AG04450 (cell line): ENCODE measurements at regions of chr13 and their contacts with region 1.

Region 1: DNA sequence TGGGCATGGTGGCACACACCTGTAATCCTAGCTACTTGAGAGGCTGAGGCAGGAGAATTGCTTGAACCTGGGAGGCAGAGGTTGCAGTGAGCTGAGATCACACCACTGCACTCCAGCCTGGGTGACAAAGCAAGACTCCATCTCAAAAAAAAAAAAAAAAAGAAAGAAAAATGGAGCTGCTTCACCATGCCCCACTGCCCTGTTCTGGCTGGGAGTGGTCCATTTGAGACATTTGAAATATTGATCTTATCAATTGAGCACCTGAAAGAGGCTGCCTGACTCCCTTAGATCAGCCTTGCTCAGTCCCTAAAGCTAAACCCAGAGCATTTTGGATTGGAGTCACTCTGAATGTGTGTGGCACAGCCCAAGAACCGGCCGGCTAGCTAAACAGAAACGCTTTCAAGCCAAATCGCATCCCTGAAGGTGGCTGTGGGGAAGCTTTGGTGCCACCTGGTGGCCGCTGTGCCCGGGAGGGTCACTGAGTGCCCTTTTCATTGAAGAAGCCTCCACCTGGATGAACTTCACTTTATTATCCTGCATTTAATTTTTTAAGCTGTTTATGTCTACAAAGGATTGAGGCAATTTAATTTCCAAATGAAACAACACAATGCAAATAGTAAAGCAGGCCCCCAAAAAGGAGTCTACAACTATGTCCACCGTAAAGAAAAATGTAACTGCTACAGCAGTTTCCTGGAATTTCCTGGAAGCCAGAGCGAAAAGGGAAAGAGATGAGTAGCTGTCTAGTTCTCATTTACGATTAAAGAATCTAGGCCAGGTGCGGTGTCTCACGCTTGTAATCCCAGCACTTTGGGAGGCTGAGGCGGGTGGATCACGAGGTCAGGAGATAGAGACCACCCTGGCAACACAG is 53.1 kb upstream of the SERPINE3 start:
- DNase-seq: peak; percentile 10
- H3K4me3 ChIP-seq: no peak overlapping the region
- H3K27ac ChIP-seq: no peak overlapping the region
- H3K27me3 ChIP-seq: peaks cover 7% of the 10 kb centered on the region
- CTCF ChIP-seq: peak; percentile 98

Region 2: GRCh38 chr13:51136276-51136980 is 149.9 kb before region 1 on chr13:
- CTCF ChIA-PET with region 1: interaction called, 182 read pairs
- POLR2A ChIA-PET with region 1: no interaction called
- DNase-seq: no peak
- H3K4me3 ChIP-seq: no peak overlapping the region
- H3K27ac ChIP-seq: no peak overlapping the region
- H3K27me3 ChIP-seq: no peaks in the 10 kb centered on the region
- CTCF ChIP-seq: no peak

Region 3: GRCh38 chr13:51154029-51154555 is 132.3 kb before region 1 on chr13:
- CTCF ChIA-PET with region 1: interaction called, 203 read pairs
- POLR2A ChIA-PET with region 1: interaction called, 8 read pairs
- DNase-seq: no peak
- H3K4me3 ChIP-seq: no peak overlapping the region
- H3K27ac ChIP-seq: no peak overlapping the region
- H3K27me3 ChIP-seq: peaks cover 10% of the 10 kb centered on the region
- CTCF ChIP-seq: no peak

Region 4: GRCh38 chr13:51235756-51236490 is 50.4 kb before region 1 on chr13:
- CTCF ChIA-PET with region 1: interaction called, 20 read pairs
- POLR2A ChIA-PET with region 1: no interaction called
- DNase-seq: no peak
- H3K4me3 ChIP-seq: no peak overlapping the region
- H3K27ac ChIP-seq: no peak overlapping the region
- H3K27me3 ChIP-seq: peaks cover 12% of the 10 kb centered on the region
- CTCF ChIP-seq: no peak

Region 5: GRCh38 chr13:51269039-51269438 is 17.3 kb before region 1 on chr13:
- CTCF ChIA-PET with region 1: interaction called, 84 read pairs
- POLR2A ChIA-PET with region 1: no interaction called
- DNase-seq: no peak
- H3K4me3 ChIP-seq: no peak overlapping the region
- H3K27ac ChIP-seq: no peak overlapping the region
- H3K27me3 ChIP-seq: peaks cover 2% of the 10 kb centered on the region
- CTCF ChIP-seq: no peak

Region 6: DNA sequence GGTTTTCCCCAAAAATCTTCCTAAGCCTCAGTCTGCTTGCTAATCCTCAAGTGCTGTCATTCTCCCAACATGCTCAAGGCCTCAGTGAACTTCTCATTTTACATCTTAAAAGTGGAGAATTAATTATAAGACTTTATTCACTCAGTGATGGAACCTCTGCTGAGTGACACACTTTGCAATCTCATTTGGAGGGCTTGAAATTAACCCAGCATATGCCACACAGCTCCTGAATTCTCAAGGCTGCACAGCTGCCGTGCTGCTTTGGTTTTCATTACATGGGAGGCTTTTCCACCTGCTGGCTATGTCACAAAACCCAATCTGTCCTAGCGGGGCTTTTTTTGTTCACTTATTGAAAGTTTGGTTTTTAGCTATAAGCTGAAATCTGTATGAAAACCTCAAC is 24.9 kb after region 1 on chr13:
- CTCF ChIA-PET with region 1: interaction called, 17 read pairs
- POLR2A ChIA-PET with region 1: interaction called, 5 read pairs
- DNase-seq: no peak
- H3K4me3 ChIP-seq: no peak overlapping the region
- H3K27ac ChIP-seq: no peak overlapping the region
- H3K27me3 ChIP-seq: peaks cover 3% of the 10 kb centered on the region
- CTCF ChIP-seq: no peak